CD4-positive, alpha-beta memory T cell (primary cell): ENCODE measurements at regions of chr11 and their contacts with region 1.

Region 1: DNA sequence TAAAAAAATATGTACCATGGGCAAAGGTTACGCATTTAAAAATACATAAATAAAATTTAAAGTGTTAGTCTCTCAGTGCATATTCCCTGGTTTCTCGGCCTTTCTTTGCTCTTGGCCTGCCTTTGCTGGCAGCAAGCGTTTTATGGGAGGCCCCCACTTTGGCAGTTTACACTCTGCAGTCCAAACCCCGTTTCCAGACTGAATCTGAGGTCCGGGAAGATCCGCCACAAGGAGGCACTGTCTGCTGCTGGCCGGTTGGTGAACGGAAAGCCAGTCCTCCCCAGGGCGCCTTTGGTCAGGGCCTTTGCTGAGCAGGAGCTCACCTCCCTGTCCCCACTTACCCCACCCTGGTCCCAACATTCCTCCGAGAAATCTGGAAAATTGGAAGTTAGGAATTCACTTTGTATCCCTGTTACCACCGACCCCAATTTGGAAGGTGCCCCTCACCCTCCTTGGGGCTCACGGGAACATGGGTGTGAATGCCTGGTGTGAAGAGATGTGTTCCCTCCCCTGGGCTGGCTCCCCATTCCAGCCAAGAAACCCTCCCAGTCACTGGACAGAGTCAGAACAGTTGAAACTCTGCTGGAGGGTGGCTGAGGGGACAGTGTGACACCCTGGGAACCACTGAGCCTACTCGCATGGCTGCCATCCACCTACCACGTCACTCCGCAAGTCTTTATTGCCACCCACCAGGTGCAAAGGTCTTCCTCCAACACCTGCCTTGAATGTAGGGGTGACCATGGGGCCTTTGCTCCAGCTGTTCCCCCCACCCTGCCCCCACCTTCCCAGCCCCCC is 9.4 kb upstream of the SF1 start:
- DNase-seq: peak; percentile 48 to 61 (median 52)
- H3K4me3 ChIP-seq: no peak overlapping the region
- H3K4me3 Mint-ChIP-seq: no peak overlapping the region
- H3K27ac ChIP-seq: no peak overlapping the region
- H3K27ac Mint-ChIP-seq: peak overlapping the region in 6 of 7 donors; percentile 48 to 90 (median 82)
- H3K4me1 ChIP-seq: peaks cover 6% of the 10 kb centered on the region
- H3K4me1 Mint-ChIP-seq: peaks cover 3 to 6% (median 4%) of the 10 kb centered on the region in 4 donors
- H3K27me3 ChIP-seq: no peaks in the 10 kb centered on the region
- H3K27me3 Mint-ChIP-seq: no peaks in the 10 kb centered on the region

Region 2: GRCh38 chr11:64803163-64803845 is 15.6 kb after region 1 on chr11 and contains the start of gene MAP4K2:
- CTCF ChIA-PET with region 1: interaction called, 12 read pairs
- POLR2A ChIA-PET with region 1: interaction called, 15 read pairs
- intact Hi-C with region 1: no loop called
- DNase-seq: peak; percentile 84 to 91 (median 89)
- H3K4me3 ChIP-seq: peak within 1 kb of the TSS; percentile 79
- H3K4me3 Mint-ChIP-seq: peak within 1 kb of the TSS; percentile 87 to 92 (median 90)
- H3K27ac ChIP-seq: peak within 1 kb of the TSS; percentile 93
- H3K27ac Mint-ChIP-seq: peak within 1 kb of the TSS; percentile 94 to 97 (median 96)
- H3K4me1 ChIP-seq: peaks cover 35% of the 10 kb centered on the region
- H3K4me1 Mint-ChIP-seq: peaks cover 9 to 48% (median 24%) of the 10 kb centered on the region in 4 donors
- H3K27me3 ChIP-seq: no peaks in the 10 kb centered on the region
- H3K27me3 Mint-ChIP-seq: no peaks in the 10 kb centered on the region
- total RNA-seq, gene MAP4K2: 122 to 128 TPM

Region 3: DNA sequence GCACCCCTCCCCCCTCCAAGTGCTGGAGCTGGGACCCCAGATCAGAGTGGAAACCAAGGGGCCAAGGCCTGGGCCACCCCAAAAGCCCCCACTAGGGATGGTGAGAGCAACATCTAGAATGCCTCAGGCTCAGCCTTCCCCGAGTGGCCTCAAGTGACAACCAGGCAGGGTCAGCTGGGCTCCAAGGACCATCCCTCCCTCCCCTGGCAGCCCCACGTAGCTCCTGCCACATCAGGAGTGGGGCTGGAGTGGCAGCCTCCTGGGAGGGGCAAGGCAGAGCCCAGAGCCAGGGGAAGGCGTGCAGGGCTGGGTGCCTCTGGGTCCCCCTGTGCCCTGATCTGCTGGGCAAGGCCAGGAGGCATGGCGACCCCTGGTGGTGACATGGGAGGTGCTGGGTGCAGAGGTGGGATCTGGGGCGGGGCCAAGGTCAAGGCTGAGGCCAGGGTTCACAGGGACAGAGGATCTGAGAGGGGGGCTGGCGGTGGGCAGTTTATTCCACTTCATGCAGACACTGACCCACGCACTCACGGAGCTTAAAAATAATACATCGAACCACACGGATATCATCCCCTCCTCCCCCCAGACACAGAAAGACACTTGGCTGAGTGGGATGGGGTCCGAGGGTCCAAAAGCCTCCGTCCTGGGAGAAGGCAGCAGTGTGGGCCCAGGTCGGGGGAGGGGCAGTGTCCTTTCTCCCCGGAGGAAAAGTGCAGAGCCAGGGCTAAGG is 106.5 kb after region 1 on chr11:
- CTCF ChIA-PET with region 1: interaction called, 5 read pairs
- POLR2A ChIA-PET with region 1: no interaction called
- intact Hi-C with region 1: loop called (anchors 1 kb)
- DNase-seq: peak; percentile 82 to 87 (median 84)
- H3K4me3 ChIP-seq: no peak overlapping the region
- H3K4me3 Mint-ChIP-seq: no peak overlapping the region
- H3K27ac ChIP-seq: no peak overlapping the region
- H3K27ac Mint-ChIP-seq: peak overlapping the region in 3 of 7 donors; percentile 64 to 76 (median 74)
- H3K4me1 ChIP-seq: peaks cover 4% of the 10 kb centered on the region
- H3K4me1 Mint-ChIP-seq: peaks cover 2 to 12% (median 2%) of the 10 kb centered on the region in 4 donors
- H3K27me3 ChIP-seq: no peaks in the 10 kb centered on the region
- H3K27me3 Mint-ChIP-seq: no peaks in the 10 kb centered on the region

Region 4: DNA sequence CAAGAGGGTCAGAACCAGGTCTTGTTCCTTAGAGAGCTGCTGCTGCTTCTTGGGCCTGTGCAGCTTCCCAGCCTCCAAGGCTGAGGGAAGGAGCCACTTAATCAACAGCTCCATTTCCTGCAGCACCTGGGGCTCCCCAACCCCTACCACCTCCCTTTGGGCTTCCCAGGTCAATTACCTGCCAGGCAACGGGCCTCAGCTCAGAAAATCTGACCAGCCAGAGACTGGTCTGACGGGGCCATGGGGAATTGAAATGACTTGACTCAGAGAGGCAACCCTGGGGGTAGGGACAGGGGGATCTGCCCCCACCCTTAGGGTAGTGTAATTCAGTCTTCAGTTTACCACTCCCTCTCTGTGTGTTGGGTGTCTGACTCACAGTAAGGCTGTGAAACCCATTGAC is 188.9 kb after region 1 on chr11:
- CTCF ChIA-PET with region 1: no interaction called
- POLR2A ChIA-PET with region 1: no interaction called
- intact Hi-C with region 1: no loop called
- DNase-seq: no peak
- H3K4me3 ChIP-seq: no peak overlapping the region
- H3K4me3 Mint-ChIP-seq: no peak overlapping the region
- H3K27ac ChIP-seq: no peak overlapping the region
- H3K27ac Mint-ChIP-seq: no peak overlapping the region
- H3K4me1 ChIP-seq: peaks cover 9% of the 10 kb centered on the region
- H3K4me1 Mint-ChIP-seq: peaks cover 0 to 9% (median 5%) of the 10 kb centered on the region in 4 donors
- H3K27me3 ChIP-seq: no peaks in the 10 kb centered on the region
- H3K27me3 Mint-ChIP-seq: peaks cover 0 to 1% of the 10 kb centered on the region in 2 donors